HCT116 (cell line): ENCODE measurements at regions of chr3 and their contacts with region 1.

Region 1: DNA sequence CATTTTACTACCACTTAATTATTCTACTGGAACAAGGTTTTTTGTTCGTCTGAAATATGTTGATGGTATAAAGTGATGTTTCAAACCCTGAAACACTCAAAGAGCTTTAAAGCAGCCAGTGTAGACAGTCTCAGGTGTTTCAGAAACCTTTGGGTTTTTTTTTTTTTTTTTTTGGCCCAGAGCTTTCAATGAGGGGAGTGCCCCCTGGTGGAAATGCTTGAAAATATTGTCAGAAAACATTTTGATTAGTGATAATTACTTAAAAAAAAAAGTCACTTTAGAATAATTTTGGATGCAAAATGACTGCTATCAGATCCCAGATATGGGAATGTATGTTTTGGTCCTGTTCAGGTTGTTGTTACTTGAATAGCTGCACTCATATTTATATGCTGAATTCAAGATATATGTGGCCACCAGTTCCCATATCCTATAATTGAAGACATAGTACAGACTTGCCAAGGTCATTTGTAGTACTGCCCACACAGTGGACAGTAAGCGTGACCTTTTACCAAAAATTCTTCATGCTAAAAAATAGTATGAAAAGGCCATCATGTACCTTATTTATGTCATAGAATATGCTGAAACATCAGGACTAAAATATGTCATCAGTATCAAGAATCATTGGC is 35.9 kb downstream of the SATB1 start:
- DNase-seq: peak; percentile 7
- ATAC-seq: peak; percentile 32; the same call in 1 of the 2 replicates
- H3K4me3 ChIP-seq: no peak overlapping the region
- H3K27ac ChIP-seq: no peak overlapping the region
- H3K4me1 ChIP-seq: no peaks in the 10 kb centered on the region
- H3K27me3 ChIP-seq: no peaks in the 10 kb centered on the region
- CTCF ChIP-seq: peak; percentile 43 to 66 (median 53); a peak in 5 of 6 replicates
- POLR2A ChIP-seq: no peak
- RAD21 ChIP-seq: peak; percentile 65

Region 2: DNA sequence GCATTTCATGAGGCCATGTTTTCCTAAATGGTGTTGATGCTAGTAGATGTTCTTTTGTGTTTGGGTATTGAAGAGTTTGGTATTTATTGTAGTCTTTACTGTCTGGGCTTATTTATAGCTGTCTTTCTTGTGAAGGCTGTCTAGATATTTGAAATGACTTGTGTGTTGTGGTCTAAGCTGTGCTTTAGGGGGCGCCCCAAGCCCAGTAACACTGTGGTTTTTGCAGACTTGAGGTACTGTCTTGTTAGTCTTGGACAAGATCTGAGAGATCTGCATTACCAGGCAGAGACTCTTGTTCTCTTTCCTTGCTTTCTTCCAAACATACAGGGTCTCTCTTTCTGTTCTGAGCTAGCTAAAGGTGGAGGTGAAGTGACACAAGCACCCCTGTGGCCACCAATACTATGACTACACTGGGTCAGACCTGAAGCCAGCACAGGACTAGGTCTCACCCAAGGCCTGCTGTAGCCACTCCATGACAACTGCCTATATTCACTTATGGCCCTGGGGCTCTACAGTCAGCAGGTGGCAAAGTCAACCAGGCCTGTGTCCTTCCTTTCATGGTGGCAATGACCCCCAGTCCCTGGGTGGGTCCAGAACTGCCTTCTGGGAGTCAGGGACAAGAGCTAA is 494.7 kb before region 1 on chr3:
- CTCF ChIA-PET with region 1: interaction called, 12 read pairs
- POLR2A ChIA-PET with region 1: no interaction called
- RAD21 ChIA-PET with region 1: no interaction called
- intact Hi-C with region 1: loop called (anchors 1 kb)
- DNase-seq: peak; percentile 56
- ATAC-seq: peak; percentile 95
- H3K4me3 ChIP-seq: no peak overlapping the region
- H3K27ac ChIP-seq: no peak overlapping the region
- H3K4me1 ChIP-seq: peaks cover 0 to 7% of the 10 kb centered on the region in 2 experiments; a peak in 1 of 4 replicates
- H3K27me3 ChIP-seq: no peaks in the 10 kb centered on the region
- CTCF ChIP-seq: peak; percentile 70 to 79 (median 71); a peak in 5 of 6 replicates
- POLR2A ChIP-seq: no peak
- RAD21 ChIP-seq: peak; percentile 87

Region 3: DNA sequence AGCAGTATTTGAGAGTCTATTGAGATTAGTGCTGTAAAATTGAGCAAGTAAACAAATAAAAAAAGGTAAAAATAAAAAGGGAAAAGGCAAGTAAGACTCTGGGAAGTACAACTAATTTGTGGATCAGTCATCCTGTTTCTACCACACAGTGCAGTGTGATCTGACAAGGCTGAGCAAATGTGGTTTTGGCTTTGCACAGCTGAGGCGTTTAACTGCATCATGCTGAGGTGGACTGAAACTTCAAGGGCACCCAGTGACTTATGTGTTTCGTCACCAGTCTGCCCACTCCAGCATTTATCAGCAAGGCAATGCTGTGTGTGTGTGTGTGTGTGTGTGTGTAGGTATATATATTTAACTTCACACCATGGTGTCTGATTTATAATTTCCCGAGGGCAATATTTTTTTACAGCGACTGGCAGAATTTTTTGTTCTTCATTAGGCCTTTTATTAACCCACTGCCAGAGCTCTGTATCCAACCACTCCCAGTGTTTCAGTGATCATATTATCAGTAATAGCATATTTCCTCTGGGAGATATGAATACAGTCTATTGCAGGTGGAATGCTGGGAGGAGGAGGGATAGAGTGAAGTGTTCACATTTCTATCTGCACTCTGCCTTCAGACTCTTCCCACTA is 167.4 kb after region 1 on chr3:
- CTCF ChIA-PET with region 1: no interaction called
- POLR2A ChIA-PET with region 1: no interaction called
- RAD21 ChIA-PET with region 1: no interaction called
- intact Hi-C with region 1: no loop called
- DNase-seq: no peak
- ATAC-seq: no peak
- H3K4me3 ChIP-seq: no peak overlapping the region
- H3K27ac ChIP-seq: no peak overlapping the region
- H3K4me1 ChIP-seq: no peaks in the 10 kb centered on the region
- H3K27me3 ChIP-seq: peaks cover 9% of the 10 kb centered on the region; the same call in 1 of the 2 replicates
- CTCF ChIP-seq: no peak
- POLR2A ChIP-seq: no peak
- RAD21 ChIP-seq: no peak

Region 4: DNA sequence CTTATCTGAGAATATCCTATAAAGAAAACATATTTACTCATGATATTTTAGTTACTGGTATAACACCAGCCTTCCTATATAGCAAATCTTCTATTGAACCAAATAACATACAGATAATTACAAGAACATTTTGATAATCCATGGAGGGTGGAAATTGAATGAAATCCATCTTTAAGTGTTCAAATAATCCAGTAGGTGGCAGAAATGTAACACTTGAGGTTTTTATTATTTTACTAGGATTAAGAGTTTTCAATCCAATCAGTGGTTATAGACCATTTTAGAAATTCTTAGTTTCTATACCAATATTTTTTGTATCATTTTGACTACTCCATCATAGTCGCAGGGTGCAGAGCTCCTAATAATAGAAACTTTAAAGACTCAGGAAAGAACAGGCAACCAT is 657.2 kb after region 1 on chr3:
- CTCF ChIA-PET with region 1: no interaction called
- POLR2A ChIA-PET with region 1: no interaction called
- RAD21 ChIA-PET with region 1: no interaction called
- intact Hi-C with region 1: no loop called
- DNase-seq: no peak
- ATAC-seq: no peak
- H3K4me3 ChIP-seq: no peak overlapping the region
- H3K27ac ChIP-seq: no peak overlapping the region
- H3K4me1 ChIP-seq: no peaks in the 10 kb centered on the region
- H3K27me3 ChIP-seq: no peaks in the 10 kb centered on the region
- CTCF ChIP-seq: no peak
- POLR2A ChIP-seq: no peak
- RAD21 ChIP-seq: peak; percentile 24; the same call in 1 of the 2 replicates